Sigmoid colon (tissue), 7 donors: ENCODE measurements at regions of chr6 and their contacts with region 1.

Region 1: GRCh38 chr6:52020945-52021570 is 66.4 kb downstream of the PKHD1 start:
- DNase-seq: no peak
- H3K4me3 ChIP-seq: no peak overlapping the region
- H3K27ac ChIP-seq: no peak overlapping the region
- H3K4me1 ChIP-seq: peaks cover 0 to 26% (median 10%) of the 10 kb centered on the region in 4 donors
- H3K27me3 ChIP-seq: no peaks in the 10 kb centered on the region
- CTCF ChIP-seq: peak; percentile 53 to 84 (median 60)
- EP300 ChIP-seq: no peak
- POLR2A ChIP-seq: no peak

Region 2: DNA sequence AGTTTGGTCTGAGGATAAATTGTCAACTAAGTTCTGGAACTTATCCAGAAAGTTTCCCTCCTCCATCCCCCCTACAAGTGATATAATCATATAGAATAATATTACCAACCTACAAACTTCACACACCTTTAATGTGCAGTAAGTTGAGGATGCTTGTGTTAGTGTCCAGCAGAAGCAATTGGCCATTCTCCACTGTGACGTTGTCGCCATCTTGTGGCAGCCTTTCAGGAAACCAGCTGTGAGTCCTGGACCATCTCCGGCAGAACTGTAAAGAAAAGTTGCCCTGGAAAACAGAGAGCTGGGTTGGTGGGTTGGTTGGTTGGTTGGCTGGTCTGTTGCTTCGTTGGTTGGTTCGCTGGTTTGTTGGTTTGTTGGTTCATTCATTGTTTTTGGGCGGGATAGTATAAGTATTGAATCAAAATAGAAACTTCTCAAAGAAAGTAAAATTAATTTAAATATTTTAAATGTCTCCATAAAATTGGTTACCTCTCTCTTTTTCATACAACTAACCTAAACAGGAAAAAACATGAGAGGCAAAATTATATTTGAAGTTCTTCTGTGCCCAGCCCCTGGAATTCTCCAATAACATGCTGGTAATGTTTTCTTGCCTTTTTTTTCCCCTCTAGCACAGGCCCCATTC is 61.2 kb before region 1 on chr6:
- intact Hi-C with region 1: loop called (anchors 2 kb)
- DNase-seq: peak; percentile 70
- H3K4me3 ChIP-seq: no peak overlapping the region
- H3K27ac ChIP-seq: peak overlapping the region in 1 of 4 donors; percentile 32
- H3K4me1 ChIP-seq: peaks cover 0 to 13% (median 3%) of the 10 kb centered on the region in 4 donors
- H3K27me3 ChIP-seq: no peaks in the 10 kb centered on the region
- CTCF ChIP-seq: peak; percentile 5 to 63 (median 40)
- EP300 ChIP-seq: no peak
- POLR2A ChIP-seq: no peak

Region 3: DNA sequence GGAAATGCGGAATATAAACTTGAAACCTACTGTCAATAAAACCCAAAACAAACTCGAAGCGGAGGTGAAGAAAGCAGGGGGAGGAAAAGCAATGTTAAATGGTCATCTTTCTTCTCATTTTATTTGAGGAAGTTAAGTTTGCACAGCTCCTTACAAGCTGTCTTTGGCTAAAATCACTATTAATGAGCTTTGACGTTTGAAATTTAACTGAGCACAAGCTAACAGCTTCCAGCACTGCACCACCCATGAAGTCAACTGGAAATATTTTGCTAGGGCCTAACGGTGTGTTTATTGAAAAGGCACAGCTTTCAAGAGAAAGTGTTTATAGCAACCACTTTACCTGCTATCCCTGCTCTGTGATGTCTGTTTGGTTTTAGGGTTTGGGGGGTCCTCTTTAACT is 37.5 kb before region 1 on chr6:
- intact Hi-C with region 1: no loop called
- DNase-seq: no peak
- H3K4me3 ChIP-seq: no peak overlapping the region
- H3K27ac ChIP-seq: peak overlapping the region in 3 of 4 donors; percentile 1 to 48 (median 29)
- H3K4me1 ChIP-seq: peaks cover 0 to 16% (median 11%) of the 10 kb centered on the region in 4 donors
- H3K27me3 ChIP-seq: no peaks in the 10 kb centered on the region
- CTCF ChIP-seq: no peak
- EP300 ChIP-seq: peak in 3 of 4 donors; percentile 12 to 82 (median 79)
- POLR2A ChIP-seq: no peak